ENCODE measurements at regions of chr1 and their contacts with region 1.

Region 1: DNA sequence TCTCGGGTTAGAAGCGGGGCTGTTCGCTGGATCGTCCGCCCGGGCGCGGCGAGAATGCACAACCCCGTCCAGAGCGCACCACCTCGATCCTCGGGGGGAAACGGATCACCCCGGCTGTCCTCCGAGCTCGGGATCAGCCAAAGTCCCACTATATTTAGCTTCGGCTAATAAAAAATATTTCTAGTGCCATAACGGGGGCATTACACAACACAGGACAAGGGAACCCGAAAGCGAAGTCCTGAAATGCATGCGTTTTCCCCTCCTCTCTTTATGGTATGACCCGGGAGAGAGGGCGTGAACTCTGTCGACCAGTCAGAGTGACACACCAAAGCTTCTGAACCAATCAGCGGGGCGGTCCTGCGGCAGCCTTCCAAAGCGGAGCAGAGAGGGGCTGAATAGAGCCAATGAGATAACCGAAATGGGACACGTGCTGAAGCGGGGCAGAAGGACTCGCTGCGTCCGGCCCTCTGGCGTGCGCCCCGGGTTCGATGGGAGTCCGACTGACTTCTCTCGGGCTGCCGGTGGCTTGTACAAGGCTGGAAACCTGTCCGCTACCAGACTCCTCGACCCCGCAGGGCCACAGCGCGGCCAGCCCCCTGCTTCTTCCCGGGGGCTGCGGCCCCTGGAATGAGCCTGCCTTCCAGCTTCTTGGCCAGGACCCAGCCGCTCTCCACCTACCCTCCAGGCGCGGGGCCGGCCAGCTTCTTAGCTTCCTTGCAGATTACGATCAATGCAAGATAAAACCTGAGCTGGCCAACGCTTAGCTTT is at the start of gene ALDH4A1:
- DNase-seq: peak; percentile 98
- ATAC-seq: peak; percentile 95
- H3K4me3 ChIP-seq: peak within 1 kb of the TSS; percentile 96
- H3K27ac ChIP-seq: peak within 1 kb of the TSS; percentile 86
- H3K4me1 ChIP-seq: peaks cover 26% of the 10 kb centered on the region
- H3K27me3 ChIP-seq: no peaks in the 10 kb centered on the region
- CTCF ChIP-seq: no peak
- total RNA-seq, gene ALDH4A1: 18.1 and 24.9 TPM in 2 replicates

Region 2: GRCh38 chr1:18339161-18339560 is 563.5 kb before region 1 on chr1:
- CTCF ChIA-PET with region 1: no interaction called
- POLR2A ChIA-PET with region 1: no interaction called
- intact Hi-C with region 1: no loop called
- DNase-seq: peak; percentile 26
- ATAC-seq: no peak
- H3K4me3 ChIP-seq: no peak overlapping the region
- H3K27ac ChIP-seq: no peak overlapping the region
- H3K4me1 ChIP-seq: no peaks in the 10 kb centered on the region
- H3K27me3 ChIP-seq: no peaks in the 10 kb centered on the region
- CTCF ChIP-seq: no peak

Region 3: GRCh38 chr1:18861082-18861481 is 41.6 kb before region 1 on chr1:
- CTCF ChIA-PET with region 1: no interaction called
- POLR2A ChIA-PET with region 1: no interaction called
- intact Hi-C with region 1: no loop called
- DNase-seq: no peak
- ATAC-seq: no peak
- H3K4me3 ChIP-seq: no peak overlapping the region
- H3K27ac ChIP-seq: no peak overlapping the region
- H3K4me1 ChIP-seq: no peaks in the 10 kb centered on the region
- H3K27me3 ChIP-seq: peaks cover 15% of the 10 kb centered on the region
- CTCF ChIP-seq: no peak

Region 4: DNA sequence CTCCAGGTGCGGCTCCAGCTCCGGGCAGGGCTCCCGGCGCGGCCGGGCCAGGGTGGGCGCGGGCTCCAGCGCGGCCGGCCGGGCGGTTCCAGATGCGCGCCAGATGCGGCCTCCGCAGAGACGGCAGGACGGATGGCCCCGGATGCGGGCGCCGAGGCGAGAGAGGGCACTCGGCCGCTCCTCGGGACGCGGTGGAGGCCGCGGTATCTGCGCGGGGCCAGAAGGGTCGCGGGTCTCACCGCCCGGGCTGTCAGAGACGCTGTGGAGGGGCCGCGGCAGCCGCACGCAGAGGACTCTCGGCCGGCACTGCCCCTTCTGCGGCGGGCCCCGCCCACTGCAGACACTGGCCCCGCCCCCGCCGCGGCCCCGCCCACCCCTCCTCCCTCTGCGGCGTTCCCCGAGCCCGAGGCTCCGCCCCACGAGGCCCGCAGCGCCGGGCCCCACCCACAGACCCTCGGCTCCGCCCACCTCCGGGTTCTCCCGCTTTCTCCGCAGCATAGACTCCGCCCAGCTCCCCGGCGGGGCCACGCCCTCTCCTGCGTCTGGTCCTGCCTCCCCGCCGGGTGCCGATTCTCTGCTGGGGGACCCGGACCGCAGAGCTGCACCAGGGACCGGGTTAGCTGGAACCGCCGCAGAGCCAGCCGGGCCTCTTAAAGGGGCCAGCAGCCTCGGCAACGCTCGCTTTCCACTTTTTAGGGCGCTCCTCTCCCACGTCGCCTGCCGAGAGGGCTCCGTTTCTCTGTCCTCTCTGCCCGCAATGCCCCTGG is 53.8 kb after region 1 on chr1 and contains the start of gene IFFO2:
- CTCF ChIA-PET with region 1: interaction called, 3 read pairs
- POLR2A ChIA-PET with region 1: no interaction called
- intact Hi-C with region 1: loop called (anchors 5 kb)
- DNase-seq: peak; percentile 97
- ATAC-seq: peak; percentile 82
- H3K4me3 ChIP-seq: peak within 1 kb of the TSS; percentile 99
- H3K27ac ChIP-seq: no peak within 1 kb of the TSS; the same call in 1 of the 2 replicates
- H3K4me1 ChIP-seq: peaks cover 34% of the 10 kb centered on the region
- H3K27me3 ChIP-seq: no peaks in the 10 kb centered on the region
- CTCF ChIP-seq: no peak
- total RNA-seq, gene IFFO2: 30.7 and 55.2 TPM in 2 replicates

Region 5: GRCh38 chr1:19096036-19096833 is 193.5 kb after region 1 on chr1:
- CTCF ChIA-PET with region 1: interaction called, 7 read pairs
- POLR2A ChIA-PET with region 1: no interaction called
- intact Hi-C with region 1: loop called (anchors 1 kb)
- DNase-seq: peak; percentile 74
- ATAC-seq: peak; percentile 97
- H3K4me3 ChIP-seq: no peak overlapping the region
- H3K27ac ChIP-seq: no peak overlapping the region
- H3K4me1 ChIP-seq: no peaks in the 10 kb centered on the region
- H3K27me3 ChIP-seq: no peaks in the 10 kb centered on the region
- CTCF ChIP-seq: peak; percentile 82

Region 6: DNA sequence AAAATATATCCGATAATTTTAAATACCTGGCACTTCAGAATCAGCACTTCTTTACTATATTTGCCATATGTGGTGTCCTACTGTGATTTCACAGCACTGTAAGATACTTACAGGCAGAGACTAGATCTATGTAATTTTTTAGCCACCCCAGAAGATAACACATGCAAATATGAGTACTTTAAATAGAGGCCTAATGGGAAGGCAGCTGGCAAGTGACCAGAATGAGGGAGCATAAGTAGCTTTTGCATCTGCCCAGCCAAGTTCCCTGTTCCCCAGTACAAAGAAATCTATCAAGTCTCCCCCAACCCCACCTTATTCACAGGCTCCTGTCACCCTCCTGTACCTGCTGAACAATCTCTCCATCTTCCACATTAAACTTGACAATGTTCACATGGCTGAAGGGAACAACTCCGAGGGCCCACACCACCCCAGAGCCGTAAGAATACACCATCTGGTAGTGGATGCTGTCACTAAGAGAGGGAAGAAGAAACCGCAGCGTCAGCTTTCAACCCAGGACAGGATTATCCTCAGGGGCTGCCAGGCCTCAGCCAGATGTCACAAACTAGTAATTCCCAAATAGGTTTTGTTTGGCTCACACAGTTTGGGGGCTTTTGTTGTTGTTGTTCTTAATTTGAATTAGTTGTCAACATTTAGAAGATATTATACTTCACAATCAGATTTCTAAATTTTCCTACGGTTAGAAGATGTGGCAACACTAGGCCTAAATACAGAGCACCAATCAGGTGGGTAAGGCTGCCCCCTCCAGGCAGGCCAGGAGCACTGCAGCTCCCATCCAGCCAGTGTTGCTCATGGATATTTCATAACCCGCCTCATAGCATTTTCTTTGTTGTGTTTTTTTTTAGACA is 338.2 kb after region 1 on chr1:
- CTCF ChIA-PET with region 1: no interaction called
- POLR2A ChIA-PET with region 1: no interaction called
- intact Hi-C with region 1: loop called (anchors 10 kb)
- DNase-seq: peak; percentile 71
- ATAC-seq: peak; percentile 90
- H3K4me3 ChIP-seq: no peak overlapping the region
- H3K27ac ChIP-seq: no peak overlapping the region
- H3K4me1 ChIP-seq: no peaks in the 10 kb centered on the region
- H3K27me3 ChIP-seq: no peaks in the 10 kb centered on the region
- CTCF ChIP-seq: peak; percentile 87